Activated T-helper 2 cell treated with anti-CD3 and anti-CD28 coated beads, Interferon-gamma antibody, Interleukin-2, Interleukin-4, amounts not matched to agents 10 μg/mL and 5 μg/mL and 100 μg/mL, durations not matched to agents 14 hours and 24 hours and 36 hours (primary cell): ENCODE measurements at regions of chr19 and their contacts with region 1.

Region 1: GRCh38 chr19:52237771-52238400 is 31.5 kb upstream of the ZNF766 start:
- DNase-seq: peak; percentile 43
- H3K4me3 Mint-ChIP-seq: no peak overlapping the region
- H3K27ac Mint-ChIP-seq: no peak overlapping the region
- H3K4me1 Mint-ChIP-seq: no peaks in the 10 kb centered on the region
- H3K27me3 Mint-ChIP-seq: peaks cover 1% of the 10 kb centered on the region

Region 2: DNA sequence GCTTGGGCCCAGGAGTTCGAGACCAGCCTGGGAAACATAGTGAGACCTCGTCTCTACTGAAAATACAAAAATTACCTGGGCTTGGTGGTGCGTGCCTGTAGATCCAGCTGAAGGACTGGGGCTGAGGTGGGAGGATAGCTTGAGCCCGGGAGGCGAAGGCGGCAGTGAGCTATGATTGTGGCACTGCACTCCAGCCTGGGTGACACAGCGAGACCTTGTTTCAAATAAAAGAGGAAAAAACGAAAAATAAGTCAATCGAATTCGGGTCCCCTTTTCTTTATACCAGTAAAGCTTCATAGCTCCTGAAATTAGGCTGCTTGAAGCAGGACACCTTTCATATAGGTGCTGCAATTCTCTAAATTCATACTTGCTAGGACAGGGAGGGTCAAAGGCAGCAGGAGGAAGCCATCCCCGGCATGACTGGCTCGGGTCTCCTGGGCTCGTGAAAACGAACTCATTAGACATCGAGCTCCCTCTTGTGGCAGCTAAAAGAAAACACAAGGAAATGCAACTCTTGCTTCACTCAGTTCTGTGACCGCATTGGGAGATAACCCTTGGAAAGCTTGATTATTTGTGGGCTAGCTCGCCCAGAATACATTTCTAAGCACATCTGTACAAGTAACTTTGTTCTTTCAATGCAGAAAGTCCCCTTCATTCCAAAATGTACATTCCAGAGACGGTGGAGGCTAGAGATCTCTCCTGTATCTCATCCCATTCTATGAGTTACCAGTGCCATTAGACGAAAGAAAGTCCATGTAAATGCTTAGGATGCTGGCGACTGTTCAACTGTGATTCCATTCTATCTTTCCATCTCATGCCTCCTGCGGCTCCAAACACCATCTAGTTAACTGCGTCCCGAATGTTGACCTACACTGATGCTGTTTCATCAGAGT is 460.1 kb before region 1 on chr19:
- intact Hi-C with region 1: loop called (anchors 5 kb)
- DNase-seq: peak; percentile 12
- H3K4me3 Mint-ChIP-seq: no peak overlapping the region
- H3K27ac Mint-ChIP-seq: no peak overlapping the region
- H3K4me1 Mint-ChIP-seq: peaks cover 6% of the 10 kb centered on the region
- H3K27me3 Mint-ChIP-seq: peaks cover 4% of the 10 kb centered on the region

Region 3: DNA sequence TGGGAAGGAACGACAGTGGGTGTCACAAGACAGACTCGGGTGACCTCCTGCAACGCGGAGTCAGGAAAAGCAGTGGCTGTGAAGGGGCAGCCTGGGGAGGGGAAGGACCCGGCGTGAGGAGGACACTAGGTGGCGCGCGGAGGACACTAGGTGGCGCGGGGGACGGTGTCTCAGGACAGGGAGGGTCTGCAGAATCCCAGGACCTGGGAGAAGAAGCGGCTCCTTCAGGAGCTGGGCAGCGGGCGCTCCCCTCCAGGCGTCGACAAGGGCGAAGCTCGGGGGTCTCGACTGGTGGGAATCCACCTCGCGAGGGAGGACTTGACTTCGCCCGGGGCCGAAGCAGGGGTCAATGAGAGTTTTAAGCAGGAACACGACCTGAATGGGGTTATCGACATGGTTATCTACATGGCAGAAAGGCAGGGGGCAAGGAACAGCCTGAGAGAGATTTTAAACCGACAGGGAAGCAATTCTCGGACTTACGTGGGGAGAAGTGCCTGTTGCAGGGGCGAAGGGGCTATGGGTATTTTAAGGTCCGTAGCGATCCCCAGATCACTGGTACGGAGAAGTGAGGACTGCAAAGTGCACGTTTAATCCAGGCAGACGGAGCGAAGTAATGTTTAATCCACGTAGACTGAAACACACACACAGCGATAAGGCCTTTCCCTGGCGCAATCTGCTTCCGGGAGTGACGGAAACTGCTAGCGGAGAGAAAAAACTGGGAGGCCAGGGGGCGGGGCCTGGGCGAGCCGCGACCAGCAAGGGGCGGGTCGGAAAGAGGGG is 98.4 kb before region 1 on chr19 and contains the start of gene ZNF616:
- intact Hi-C with region 1: loop called (anchors 1 kb)
- DNase-seq: peak; percentile 93
- H3K4me3 Mint-ChIP-seq: peak within 1 kb of the TSS; percentile 93
- H3K27ac Mint-ChIP-seq: peak within 1 kb of the TSS; percentile 91
- H3K4me1 Mint-ChIP-seq: peaks cover 16% of the 10 kb centered on the region
- H3K27me3 Mint-ChIP-seq: no peaks in the 10 kb centered on the region
- total RNA-seq, gene ZNF616: 6.6 and 8.5 TPM in 2 replicates

Region 4: DNA sequence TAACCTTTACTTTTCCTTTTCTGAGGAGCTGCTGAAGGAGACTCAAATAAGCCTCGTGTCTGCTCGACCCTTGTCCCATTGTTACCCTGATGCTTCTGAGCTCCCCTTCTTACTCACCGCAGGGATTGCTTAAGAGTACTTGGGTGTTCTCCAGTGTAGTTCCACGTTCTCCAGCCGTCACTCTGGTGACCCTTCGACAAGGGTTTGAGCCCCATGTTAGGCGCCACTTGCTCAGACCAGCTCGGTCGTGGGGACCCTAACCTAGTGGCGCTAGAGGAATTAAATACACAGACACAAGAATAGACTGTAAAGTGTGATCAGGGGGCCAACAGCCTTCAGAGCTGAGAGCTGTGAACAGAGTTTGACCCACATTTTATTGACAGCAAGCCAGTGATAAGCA is 69.4 kb after region 1 on chr19:
- intact Hi-C with region 1: no loop called
- DNase-seq: no peak
- H3K4me3 Mint-ChIP-seq: no peak overlapping the region
- H3K27ac Mint-ChIP-seq: no peak overlapping the region
- H3K4me1 Mint-ChIP-seq: no peaks in the 10 kb centered on the region
- H3K27me3 Mint-ChIP-seq: no peaks in the 10 kb centered on the region

Region 5: GRCh38 chr19:52322429-52322828 is 84.5 kb after region 1 on chr19:
- intact Hi-C with region 1: no loop called
- DNase-seq: no peak
- H3K4me3 Mint-ChIP-seq: no peak overlapping the region
- H3K27ac Mint-ChIP-seq: no peak overlapping the region
- H3K4me1 Mint-ChIP-seq: no peaks in the 10 kb centered on the region
- H3K27me3 Mint-ChIP-seq: no peaks in the 10 kb centered on the region